CD4-positive, alpha-beta T cell (primary cell): ENCODE measurements at regions of chrX and their contacts with region 1.

Region 1: DNA sequence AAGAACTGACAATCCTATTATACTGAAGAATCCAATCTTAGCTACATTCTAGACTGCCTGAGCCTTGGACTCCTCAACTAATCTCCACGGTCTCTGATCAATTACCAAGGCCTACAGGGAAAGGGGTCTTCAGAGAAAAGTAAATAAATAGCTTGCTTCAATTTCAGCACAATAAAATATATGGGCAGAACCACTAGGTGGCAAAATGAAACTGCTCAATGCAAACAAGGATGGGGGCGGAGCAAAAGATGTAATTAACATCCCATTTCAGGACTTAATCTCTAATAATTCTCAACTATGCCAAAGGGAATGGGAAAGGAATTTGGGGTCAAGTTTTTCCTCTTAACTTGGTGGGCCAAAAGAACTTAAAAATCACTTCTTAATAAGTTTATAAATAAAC is 78.4 kb upstream of the MAP3K15 start:
- DNase-seq: peak in 6 of 14 experiments; percentile 3 to 62 (median 44)
- ATAC-seq: peak; percentile 44
- H3K4me3 ChIP-seq: no peak overlapping the region
- H3K4me3 Mint-ChIP-seq: no peak overlapping the region
- H3K27ac ChIP-seq: no peak overlapping the region
- H3K27ac Mint-ChIP-seq: no peak overlapping the region
- H3K4me1 ChIP-seq: no peaks in the 10 kb centered on the region
- H3K4me1 Mint-ChIP-seq: peaks cover 10% of the 10 kb centered on the region
- H3K27me3 ChIP-seq: no peaks in the 10 kb centered on the region
- H3K27me3 Mint-ChIP-seq: no peaks in the 10 kb centered on the region
- CTCF ChIP-seq: peak; percentile 54

Region 2: DNA sequence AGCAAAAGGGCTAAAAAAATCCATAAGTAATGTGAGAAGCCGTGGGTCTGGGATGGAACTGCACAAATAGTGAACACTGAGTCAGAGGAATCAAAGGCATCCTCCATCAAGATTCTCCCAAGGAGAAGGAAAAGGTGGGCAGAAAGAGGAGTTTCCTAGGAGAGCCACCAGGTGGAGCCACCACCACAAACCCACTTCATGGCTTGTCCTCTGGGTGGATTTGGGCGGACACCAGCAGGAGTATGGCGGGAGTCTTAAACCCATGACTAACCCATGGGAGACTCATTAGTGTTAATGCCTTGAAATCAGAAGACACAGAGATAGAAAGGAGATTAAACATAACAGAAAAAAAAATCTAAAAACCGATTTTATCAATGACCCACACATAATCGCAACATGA is 146.0 kb after region 1 on chrX:
- CTCF ChIA-PET with region 1: no interaction called
- POLR2A ChIA-PET with region 1: no interaction called
- intact Hi-C with region 1: loop called in 1 of 2 experiments (anchors 10 kb)
- DNase-seq: peak in 12 of 14 experiments; percentile 9 to 75 (median 33)
- ATAC-seq: peak; percentile 31
- H3K4me3 ChIP-seq: no peak overlapping the region
- H3K4me3 Mint-ChIP-seq: peak overlapping the region; percentile 56
- H3K27ac ChIP-seq: no peak overlapping the region
- H3K27ac Mint-ChIP-seq: peak overlapping the region; percentile 74
- H3K4me1 ChIP-seq: peaks cover 64% of the 10 kb centered on the region
- H3K4me1 Mint-ChIP-seq: peaks cover 79% of the 10 kb centered on the region
- H3K27me3 ChIP-seq: no peaks in the 10 kb centered on the region
- H3K27me3 Mint-ChIP-seq: no peaks in the 10 kb centered on the region
- CTCF ChIP-seq: peak; percentile 53

Region 3: GRCh38 chrX:19799319-19800182 is 205.9 kb after region 1 on chrX:
- CTCF ChIA-PET with region 1: no interaction called
- POLR2A ChIA-PET with region 1: no interaction called
- intact Hi-C with region 1: loop called in 1 of 2 experiments (anchors 10 kb)
- DNase-seq: peak in 13 of 14 experiments; percentile 21 to 79 (median 48)
- ATAC-seq: peak; percentile 82
- H3K4me3 ChIP-seq: peak overlapping the region; percentile 75
- H3K4me3 Mint-ChIP-seq: peak overlapping the region; percentile 84
- H3K27ac ChIP-seq: peak overlapping the region; percentile 72 to 74
- H3K27ac Mint-ChIP-seq: peak overlapping the region; percentile 90
- H3K4me1 ChIP-seq: peaks cover 64% of the 10 kb centered on the region
- H3K4me1 Mint-ChIP-seq: peaks cover 74% of the 10 kb centered on the region
- H3K27me3 ChIP-seq: no peaks in the 10 kb centered on the region
- H3K27me3 Mint-ChIP-seq: no peaks in the 10 kb centered on the region
- CTCF ChIP-seq: no peak